A673 (cell line): ENCODE measurements at regions of chr11 and their contacts with region 1.

Region 1: DNA sequence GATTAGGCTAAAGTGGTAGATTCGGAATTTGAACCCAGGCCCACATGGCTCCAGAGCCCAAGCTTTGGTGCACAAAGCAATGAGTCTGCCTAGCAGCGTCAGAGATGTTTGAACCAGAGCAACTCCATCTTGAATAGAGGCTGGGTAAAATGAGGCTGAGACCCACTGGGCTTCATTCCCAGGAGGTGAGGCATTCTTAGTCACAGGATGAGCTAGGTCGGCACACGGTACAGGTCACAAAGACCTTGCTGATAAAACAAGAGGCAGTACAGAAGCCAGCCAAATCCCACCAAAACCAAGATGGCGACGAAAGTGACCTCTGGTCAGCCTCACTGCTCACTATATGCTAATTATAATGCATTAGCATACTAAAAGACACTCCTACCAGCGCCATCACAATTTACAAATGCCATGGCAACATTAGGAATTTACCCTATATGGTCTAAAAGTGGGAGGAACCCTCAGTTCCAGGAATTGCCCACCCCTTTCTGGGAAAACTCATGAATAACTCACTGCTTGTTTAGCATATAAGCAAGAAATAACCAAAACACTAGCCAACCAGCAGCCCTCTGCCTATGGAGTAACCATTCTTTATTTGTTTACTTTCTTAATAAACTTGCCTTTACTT is 40.3 kb upstream of the DAGLA start:
- DNase-seq: no peak
- H3K4me3 ChIP-seq: no peak overlapping the region
- H3K27ac ChIP-seq: no peak overlapping the region
- H3K4me1 ChIP-seq: no peaks in the 10 kb centered on the region
- H3K27me3 ChIP-seq: no peaks in the 10 kb centered on the region
- CTCF ChIP-seq: no peak

Region 2: DNA sequence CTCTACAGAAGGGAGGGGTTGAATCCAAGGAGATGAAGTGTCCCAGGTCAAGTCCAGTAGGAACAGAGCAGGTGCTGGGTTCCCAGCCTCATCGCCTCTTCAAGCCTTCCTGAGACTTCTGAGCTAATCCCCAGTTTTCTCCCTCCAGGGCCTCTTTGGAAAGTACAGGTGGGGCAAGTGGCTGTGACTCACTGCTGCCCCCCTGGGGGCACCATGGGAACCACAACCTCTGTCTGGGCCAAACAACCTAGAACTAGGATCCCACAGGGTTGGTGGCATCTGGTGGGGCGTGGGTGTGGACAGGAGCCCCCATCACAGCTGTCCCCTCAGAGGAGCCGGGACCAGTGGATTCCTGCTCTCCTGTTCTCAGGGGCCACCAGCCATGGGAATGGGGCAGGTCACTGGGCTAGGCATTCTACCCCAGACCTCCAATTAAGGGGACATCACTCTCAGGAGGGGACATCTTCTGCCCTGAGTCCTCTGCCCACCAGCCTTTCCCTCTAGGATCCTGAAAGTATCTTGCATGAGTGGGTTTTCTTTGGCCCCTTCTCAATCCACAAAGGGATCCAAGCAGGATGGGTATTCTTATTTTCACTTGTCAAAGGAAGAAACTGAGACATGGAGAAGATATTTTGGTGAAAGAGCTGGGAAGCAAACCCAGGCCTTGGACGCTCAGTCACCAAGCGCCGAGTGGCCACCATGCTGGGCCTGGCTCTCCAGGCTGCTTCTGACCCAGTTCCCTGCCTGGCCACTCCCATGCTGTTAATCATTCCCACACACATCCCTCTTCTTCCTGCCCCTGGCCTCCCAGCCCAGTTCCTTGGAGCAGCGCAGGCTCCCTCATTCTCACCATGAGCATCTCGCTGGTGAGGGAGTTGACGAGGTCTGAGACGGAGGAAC is 107.5 kb before region 1 on chr11:
- CTCF ChIA-PET with region 1: no interaction called
- POLR2A ChIA-PET with region 1: no interaction called
- intact Hi-C with region 1: loop called (anchors 5 kb)
- DNase-seq: peak; percentile 70
- H3K4me3 ChIP-seq: no peak overlapping the region
- H3K27ac ChIP-seq: no peak overlapping the region
- H3K4me1 ChIP-seq: no peaks in the 10 kb centered on the region
- H3K27me3 ChIP-seq: no peaks in the 10 kb centered on the region
- CTCF ChIP-seq: peak; percentile 98

Region 3: DNA sequence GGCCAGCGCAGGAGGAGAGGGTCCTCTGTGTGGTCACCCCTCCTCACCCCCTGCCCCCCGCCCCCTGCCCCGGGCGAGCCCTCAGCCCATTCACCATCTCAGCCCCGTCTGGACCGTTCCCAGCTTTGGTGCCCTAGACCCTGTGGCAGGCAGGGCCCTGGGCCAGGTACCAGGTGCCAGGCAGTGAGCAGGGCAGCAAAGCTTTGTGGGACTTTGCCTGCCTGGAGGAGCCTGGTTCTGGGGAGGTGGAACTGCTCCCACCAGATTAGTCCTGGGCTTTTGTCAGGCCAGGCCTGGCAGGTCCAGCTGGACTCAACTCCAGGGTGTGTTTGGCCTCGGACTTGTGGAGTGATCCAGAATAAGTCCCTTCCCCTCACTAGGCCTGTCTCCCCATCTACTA is 98.8 kb after region 1 on chr11:
- CTCF ChIA-PET with region 1: interaction called, 10 read pairs
- POLR2A ChIA-PET with region 1: no interaction called
- intact Hi-C with region 1: no loop called
- DNase-seq: no peak
- H3K4me3 ChIP-seq: no peak overlapping the region
- H3K27ac ChIP-seq: no peak overlapping the region
- H3K4me1 ChIP-seq: no peaks in the 10 kb centered on the region
- H3K27me3 ChIP-seq: no peaks in the 10 kb centered on the region
- CTCF ChIP-seq: no peak

Region 4: DNA sequence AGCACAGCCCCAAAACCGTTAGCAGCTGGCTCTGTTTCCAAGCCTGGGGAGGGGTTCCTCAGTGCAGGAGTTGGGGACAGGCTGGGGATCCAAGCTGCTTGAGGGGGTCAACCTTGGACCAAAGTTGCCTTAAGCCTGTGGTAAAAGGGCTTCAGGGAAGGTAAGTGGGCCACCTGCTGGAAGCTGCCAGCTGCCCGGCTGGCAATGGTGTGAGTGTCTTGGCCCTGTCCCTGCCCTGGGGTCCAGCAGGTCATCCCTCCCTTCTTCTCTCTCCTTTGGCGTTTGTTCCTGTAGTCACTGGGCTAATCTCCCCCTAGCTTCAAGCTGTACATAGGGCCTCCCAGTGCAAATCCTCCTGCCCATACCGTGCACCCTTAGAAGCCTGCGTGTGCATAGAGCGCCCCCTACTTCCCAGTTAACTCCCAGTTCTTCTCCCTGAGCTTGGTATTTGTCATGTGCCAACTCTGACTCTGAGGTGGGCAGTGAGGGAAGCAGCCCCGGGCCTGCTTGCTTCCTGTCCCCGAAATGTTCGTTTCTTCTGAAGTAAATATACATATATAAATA is 148.1 kb after region 1 on chr11:
- CTCF ChIA-PET with region 1: no interaction called
- POLR2A ChIA-PET with region 1: no interaction called
- intact Hi-C with region 1: no loop called
- DNase-seq: peak; percentile 83
- H3K4me3 ChIP-seq: no peak overlapping the region
- H3K27ac ChIP-seq: no peak overlapping the region
- H3K4me1 ChIP-seq: peaks cover 7% of the 10 kb centered on the region
- H3K27me3 ChIP-seq: no peaks in the 10 kb centered on the region
- CTCF ChIP-seq: peak; percentile 80